SK-N-SH (cell line): ENCODE measurements at regions of chr17 and their contacts with region 1.

Region 1: GRCh38 chr17:75261336-75262111 is at the starts of genes GGA3 and MRPS7:
- DNase-seq: peak; percentile 100
- H3K4me3 ChIP-seq: peak within 1 kb of the TSS; percentile 88 to 99
- H3K27ac ChIP-seq: peak within 1 kb of the TSS; percentile 96 to 98
- H3K4me1 ChIP-seq: peaks cover 4 to 21% of the 10 kb centered on the region in 2 experiments; a peak in 2 of 4 replicates
- H3K27me3 ChIP-seq: no peaks in the 10 kb centered on the region
- CTCF ChIP-seq: no peak
- EP300 ChIP-seq: no peak
- RAD21 ChIP-seq: no peak
- polyA plus RNA-seq, gene GGA3: 42.5 and 43.7 TPM in 2 replicates
- polyA plus RNA-seq, gene MRPS7: 82.8 and 90.4 TPM in 2 replicates

Region 2: GRCh38 chr17:75238684-75239191 is 22.8 kb before region 1 on chr17:
- CTCF ChIA-PET with region 1: interaction called, 57 read pairs
- POLR2A ChIA-PET with region 1: interaction called, 5 read pairs
- DNase-seq: peak; percentile 90
- H3K4me3 ChIP-seq: no peak overlapping the region
- H3K27ac ChIP-seq: no peak overlapping the region
- H3K4me1 ChIP-seq: no peaks in the 10 kb centered on the region; a peak in 1 of 4 replicates
- H3K27me3 ChIP-seq: no peaks in the 10 kb centered on the region
- CTCF ChIP-seq: peak; percentile 98
- EP300 ChIP-seq: no peak
- RAD21 ChIP-seq: peak; percentile 54

Region 3: GRCh38 chr17:75250009-75250471 is 11.5 kb before region 1 on chr17:
- CTCF ChIA-PET with region 1: interaction called, 12 read pairs
- POLR2A ChIA-PET with region 1: interaction called, 9 read pairs
- DNase-seq: no peak
- H3K4me3 ChIP-seq: no peak overlapping the region
- H3K27ac ChIP-seq: no peak overlapping the region
- H3K4me1 ChIP-seq: peaks cover 0 to 4% of the 10 kb centered on the region in 2 experiments; a peak in 1 of 4 replicates
- H3K27me3 ChIP-seq: no peaks in the 10 kb centered on the region
- CTCF ChIP-seq: no peak
- EP300 ChIP-seq: no peak
- RAD21 ChIP-seq: no peak

Region 4: DNA sequence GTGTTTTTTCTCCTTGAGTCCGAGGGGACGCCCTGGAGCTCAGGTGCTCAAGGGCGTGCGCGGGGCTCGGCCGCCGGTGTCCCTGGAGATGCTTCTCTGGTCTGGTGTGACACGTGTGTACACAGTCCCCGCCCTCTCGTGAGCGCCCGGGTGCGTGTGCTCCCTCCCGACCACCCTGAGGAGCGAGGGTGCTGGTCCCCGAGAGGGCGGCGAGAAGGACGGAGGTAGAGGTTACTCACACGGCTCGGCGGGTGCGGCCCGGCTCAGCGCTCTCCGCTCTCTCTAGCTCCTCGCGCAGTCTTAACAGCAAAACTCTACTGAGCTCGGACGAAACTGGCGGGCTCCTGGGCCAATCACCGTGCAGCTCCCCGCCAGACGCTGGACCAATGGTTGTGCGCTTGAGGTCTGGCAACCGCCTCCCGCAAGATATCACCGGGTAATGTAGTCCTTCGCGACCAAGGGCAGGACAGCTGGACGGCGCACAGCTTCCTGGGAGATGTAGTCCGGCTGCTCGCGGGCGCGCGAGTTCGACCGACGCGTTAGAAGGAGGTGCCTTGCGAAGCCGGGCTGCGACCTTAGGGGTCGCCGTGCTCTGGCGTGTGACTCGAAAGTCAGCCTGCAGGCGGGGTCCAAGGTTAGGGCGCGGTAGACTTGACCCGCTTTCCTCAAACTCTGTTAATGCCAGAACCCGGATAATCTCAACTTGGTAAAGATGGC is 27.7 kb after region 1 on chr17 and contains the start of gene SLC25A19:
- CTCF ChIA-PET with region 1: interaction called, 13 read pairs
- POLR2A ChIA-PET with region 1: interaction called, 10 read pairs
- DNase-seq: peak; percentile 99
- H3K4me3 ChIP-seq: peak within 1 kb of the TSS; percentile 68 to 80
- H3K27ac ChIP-seq: peak within 1 kb of the TSS; percentile 73 to 80
- H3K4me1 ChIP-seq: peaks cover 4 to 5% of the 10 kb centered on the region in 2 experiments; a peak in 2 of 4 replicates
- H3K27me3 ChIP-seq: no peaks in the 10 kb centered on the region
- CTCF ChIP-seq: peak; percentile 26; the same call in 1 of the 2 replicates
- EP300 ChIP-seq: no peak
- RAD21 ChIP-seq: 0 out of 2 replicates have a peak, but pooled peaks have one; percentile 34
- polyA plus RNA-seq, gene SLC25A19: 11.7 and 13.2 TPM in 2 replicates

Region 5: GRCh38 chr17:75393523-75394331 is 132.2 kb after region 1 on chr17:
- CTCF ChIA-PET with region 1: interaction called, 6 read pairs
- POLR2A ChIA-PET with region 1: interaction called, 10 read pairs
- DNase-seq: peak; percentile 98
- H3K4me3 ChIP-seq: peak overlapping the region; percentile 80 to 99
- H3K27ac ChIP-seq: peak overlapping the region; percentile 71 to 95
- H3K4me1 ChIP-seq: peaks cover 12 to 21% of the 10 kb centered on the region in 2 experiments
- H3K27me3 ChIP-seq: no peaks in the 10 kb centered on the region
- CTCF ChIP-seq: peak; percentile 15; the same call in 1 of the 2 replicates
- EP300 ChIP-seq: peak in 1 of 2 experiments; percentile 45; a peak in 1 of 4 replicates
- RAD21 ChIP-seq: peak; percentile 11; the same call in 1 of the 2 replicates

Region 6: DNA sequence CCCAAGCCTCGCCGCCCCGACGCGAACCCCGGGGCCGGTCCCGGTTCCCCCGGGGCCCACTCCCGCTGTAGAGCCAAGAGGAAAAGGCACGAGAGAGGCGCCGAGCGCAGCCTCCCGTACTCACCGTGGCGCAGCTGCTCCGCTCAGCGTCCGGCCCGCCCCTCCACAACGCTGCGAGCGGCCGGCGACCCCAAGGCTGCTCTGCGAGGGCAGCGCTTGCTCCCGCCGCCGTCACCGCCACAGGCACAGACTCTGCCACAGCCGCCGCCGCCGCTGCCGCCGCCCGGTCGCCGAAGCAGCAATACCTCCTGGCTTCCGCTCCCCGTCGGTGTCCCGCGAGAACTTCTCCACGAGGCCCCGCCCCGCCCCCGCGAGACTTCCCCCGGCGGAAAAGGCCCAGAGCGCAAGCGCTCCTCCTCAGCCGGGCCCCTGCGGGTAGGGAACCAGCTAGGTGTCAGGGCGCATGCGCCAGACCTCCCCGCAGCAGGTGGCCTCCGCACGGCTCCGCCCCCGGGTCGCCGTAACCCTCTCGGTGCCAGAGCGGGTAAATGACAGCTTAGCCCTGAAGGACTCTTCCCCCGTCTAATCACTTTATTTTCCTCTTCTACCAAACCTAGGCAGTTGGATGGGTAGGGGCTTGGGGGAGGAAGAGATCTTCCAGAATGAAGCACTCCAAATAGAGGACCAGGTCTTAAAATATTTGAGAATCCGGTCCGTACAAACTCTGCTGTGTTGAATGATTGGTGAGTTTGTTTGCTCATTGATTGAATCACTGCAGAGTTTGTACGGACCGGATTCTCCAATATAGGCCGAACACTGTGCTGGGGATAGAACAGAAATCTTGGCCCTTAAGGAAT is 144.1 kb after region 1 on chr17 and contains the start of gene GRB2:
- CTCF ChIA-PET with region 1: interaction called, 7 read pairs
- POLR2A ChIA-PET with region 1: interaction called, 11 read pairs
- DNase-seq: peak; percentile 100
- H3K4me3 ChIP-seq: peak within 1 kb of the TSS; percentile 82 to 86
- H3K27ac ChIP-seq: peak within 1 kb of the TSS; percentile 69 to 70
- H3K4me1 ChIP-seq: peaks cover 4 to 6% of the 10 kb centered on the region in 2 experiments; a peak in 3 of 4 replicates
- H3K27me3 ChIP-seq: no peaks in the 10 kb centered on the region; the same call in 1 of the 2 replicates
- CTCF ChIP-seq: no peak
- EP300 ChIP-seq: no peak; a peak in 1 of 4 replicates
- RAD21 ChIP-seq: no peak
- polyA plus RNA-seq, gene GRB2: 81.6 and 89.6 TPM in 2 replicates

Region 7: DNA sequence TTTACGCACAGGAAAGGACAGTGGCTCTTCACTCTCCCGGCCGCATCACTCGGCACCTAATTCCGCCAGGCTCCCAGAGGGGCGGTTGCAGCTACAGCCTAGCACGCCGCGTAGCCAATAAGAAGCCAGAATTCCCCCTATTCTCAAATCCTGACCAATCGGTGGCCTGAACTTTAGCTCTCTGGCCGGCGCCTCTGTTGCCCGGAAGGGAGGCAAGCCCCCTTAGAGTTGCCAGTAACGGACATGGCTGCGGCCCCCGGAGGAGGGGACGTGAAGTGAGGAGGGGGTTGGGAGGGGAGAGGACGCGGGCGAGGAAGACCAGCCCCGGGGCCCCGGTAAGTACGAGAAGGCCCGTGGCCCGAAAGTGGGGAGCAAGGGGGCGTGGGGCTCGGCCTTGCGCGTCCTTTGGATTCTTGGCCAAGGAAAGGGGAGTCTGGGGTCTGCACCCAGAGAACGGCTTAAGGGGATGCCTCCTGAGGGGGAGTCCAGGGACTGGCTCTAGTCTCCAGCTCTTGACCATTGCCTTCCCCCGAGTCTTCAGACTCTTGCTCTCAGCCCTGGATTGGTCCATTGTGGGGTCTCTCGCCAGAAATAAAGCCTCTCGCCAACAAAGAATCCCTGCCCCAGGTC is 195.0 kb after region 1 on chr17 and contains the start of gene TMEM94:
- CTCF ChIA-PET with region 1: no interaction called
- POLR2A ChIA-PET with region 1: interaction called, 10 read pairs
- DNase-seq: peak; percentile 98
- H3K4me3 ChIP-seq: peak within 1 kb of the TSS; percentile 74 to 82
- H3K27ac ChIP-seq: peak within 1 kb of the TSS; percentile 90 to 94
- H3K4me1 ChIP-seq: peaks cover 0 to 15% of the 10 kb centered on the region in 2 experiments; a peak in 3 of 4 replicates
- H3K27me3 ChIP-seq: no peaks in the 10 kb centered on the region
- CTCF ChIP-seq: no peak
- EP300 ChIP-seq: no peak
- RAD21 ChIP-seq: no peak
- polyA plus RNA-seq, gene TMEM94: 68.0 and 89.9 TPM in 2 replicates